ENCODE measurements at regions of chr3 and their contacts with region 1.

Region 1: GRCh38 chr3:197711973-197712707 is 24.6 kb downstream of the RUBCN start:
- DNase-seq: peak; percentile 98
- H3K4me3 ChIP-seq: peak overlapping the region; percentile 15 to 57 (median 44)
- H3K27ac ChIP-seq: peak overlapping the region; percentile 99
- H3K4me1 ChIP-seq: peaks cover 16% of the 10 kb centered on the region
- H3K27me3 ChIP-seq: no peaks in the 10 kb centered on the region
- CTCF ChIP-seq: no peak

Region 2: DNA sequence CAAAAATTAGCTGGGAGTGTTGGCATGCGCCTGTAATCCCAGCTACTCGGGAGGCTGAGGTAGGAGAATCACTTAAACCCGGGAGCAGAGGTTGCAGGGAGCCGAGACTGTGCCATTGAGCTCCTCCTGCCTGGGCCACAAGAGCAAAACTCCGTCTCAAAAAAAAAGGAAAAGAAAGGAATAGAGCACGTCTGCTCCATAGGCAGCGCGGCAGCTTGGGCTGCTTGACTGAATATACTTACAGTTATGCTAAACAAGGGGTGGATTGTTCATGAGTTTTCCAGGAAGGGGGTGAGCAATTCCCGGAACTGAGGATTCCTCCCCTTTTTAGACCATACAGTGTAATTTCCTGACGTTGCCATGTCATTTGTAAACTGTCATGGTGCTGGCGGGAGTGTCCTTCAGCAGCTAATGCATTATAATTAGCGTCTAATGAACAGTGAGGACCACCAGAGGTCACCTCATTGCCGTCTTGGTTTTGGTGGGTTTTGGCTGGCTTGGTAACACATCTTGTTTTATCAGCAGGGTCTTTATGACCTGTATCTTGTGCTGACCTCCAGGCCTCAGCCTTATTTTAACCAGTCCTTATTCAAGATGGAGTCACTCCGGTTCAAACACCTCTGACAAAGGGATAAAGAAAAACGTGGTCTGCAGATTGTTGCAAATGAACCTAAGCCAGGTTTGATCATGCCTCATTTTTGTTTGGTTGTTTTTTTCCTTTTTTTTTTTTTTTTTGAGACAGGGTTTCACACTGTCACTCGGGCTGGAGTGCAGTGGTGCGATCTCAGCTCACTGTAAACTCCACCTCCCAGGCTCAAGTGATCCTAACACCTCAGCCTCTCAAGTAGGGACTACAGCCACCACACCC is 869.3 kb before region 1 on chr3:
- CTCF ChIA-PET with region 1: no interaction called
- dilution Hi-C with region 1: no loop called
- in situ Hi-C with region 1: no loop called
- intact Hi-C with region 1: no loop called
- DNase-seq: no peak
- H3K4me3 ChIP-seq: no peak overlapping the region
- H3K27ac ChIP-seq: no peak overlapping the region
- H3K4me1 ChIP-seq: no peaks in the 10 kb centered on the region
- H3K27me3 ChIP-seq: no peaks in the 10 kb centered on the region
- CTCF ChIP-seq: no peak

Region 3: DNA sequence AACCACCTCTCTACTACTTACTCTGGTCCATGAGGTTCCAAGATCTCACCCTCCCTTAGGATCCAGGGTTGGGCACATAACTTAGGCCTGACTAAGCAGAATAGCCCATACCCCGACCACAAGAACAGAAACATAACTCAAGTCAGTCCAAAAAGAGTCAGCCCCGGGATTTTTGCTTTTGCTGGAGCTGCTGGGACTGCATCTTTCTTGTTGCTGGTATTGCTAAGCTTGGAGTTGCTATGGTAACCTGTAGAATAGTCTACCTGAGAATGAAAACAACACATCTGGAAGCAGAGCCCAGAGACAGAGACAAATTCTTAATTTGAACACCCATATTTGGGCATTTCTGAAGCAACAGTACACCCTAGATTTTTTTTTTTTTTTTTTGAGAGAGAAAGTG is 18.1 kb after region 1 on chr3:
- CTCF ChIA-PET with region 1: no interaction called
- dilution Hi-C with region 1: no loop called
- in situ Hi-C with region 1: no loop called
- intact Hi-C with region 1: loop called (anchors 1 kb)
- DNase-seq: peak; percentile 96
- H3K4me3 ChIP-seq: no peak overlapping the region
- H3K27ac ChIP-seq: peak overlapping the region; percentile 95
- H3K4me1 ChIP-seq: peaks cover 7% of the 10 kb centered on the region
- H3K27me3 ChIP-seq: no peaks in the 10 kb centered on the region
- CTCF ChIP-seq: no peak

Region 4: DNA sequence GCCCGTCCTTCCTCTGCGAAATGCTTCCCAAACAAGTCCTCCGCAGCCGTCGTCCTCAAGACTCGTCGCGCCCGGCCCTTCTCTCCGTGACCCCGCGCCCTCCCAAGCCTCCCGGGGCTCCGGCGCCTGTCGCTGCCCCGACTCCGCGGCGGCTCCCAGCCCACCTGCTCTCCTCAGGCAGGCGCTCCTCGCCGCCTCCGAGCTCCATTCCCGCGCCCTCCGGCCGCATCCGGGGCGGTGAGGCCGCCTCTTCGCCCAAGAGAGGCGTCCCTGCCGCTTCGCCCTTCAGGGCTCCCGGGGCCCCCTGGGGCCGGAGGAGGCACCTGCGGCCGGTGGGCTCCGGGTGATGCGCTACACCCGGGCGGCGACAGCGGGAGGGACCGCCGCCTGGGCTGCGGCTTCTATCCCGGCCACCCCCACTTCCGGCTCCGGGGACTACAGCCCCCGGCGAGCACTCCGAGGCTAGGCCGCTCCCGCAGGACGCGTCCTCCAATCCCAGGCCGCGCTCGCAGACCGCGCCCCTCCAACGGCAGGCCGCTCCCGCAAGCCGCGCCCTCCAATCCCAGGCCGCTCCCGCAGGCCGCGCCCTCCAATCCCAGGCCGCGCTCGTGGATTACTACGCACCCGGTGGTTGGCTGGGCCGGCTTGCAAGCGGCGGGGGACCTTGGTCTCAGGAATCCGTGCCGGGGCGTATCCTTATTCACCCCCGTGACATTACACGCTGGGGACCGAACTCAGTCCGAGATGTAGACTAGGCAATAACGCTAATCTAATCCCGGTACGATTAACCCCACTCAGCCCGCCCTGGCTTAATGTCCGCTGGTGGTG is 24.6 kb after region 1 on chr3 and contains the start of gene RUBCN:
- CTCF ChIA-PET with region 1: no interaction called
- dilution Hi-C with region 1: no loop called
- in situ Hi-C with region 1: no loop called
- intact Hi-C with region 1: loop called (anchors 1 kb)
- DNase-seq: peak; percentile 96
- H3K4me3 ChIP-seq: peak within 1 kb of the TSS; percentile 53 to 83 (median 81)
- H3K27ac ChIP-seq: peak within 1 kb of the TSS; percentile 65
- H3K4me1 ChIP-seq: peaks cover 15% of the 10 kb centered on the region
- H3K27me3 ChIP-seq: no peaks in the 10 kb centered on the region
- CTCF ChIP-seq: no peak
- total RNA-seq, gene RUBCN: 21.0 to 32.6 TPM

Region 5: GRCh38 chr3:197749601-197750395 is 37.7 kb after region 1 on chr3 and contains the start of gene FYTTD1:
- CTCF ChIA-PET with region 1: interaction called, 7 read pairs
- dilution Hi-C with region 1: no loop called
- in situ Hi-C with region 1: no loop called
- intact Hi-C with region 1: loop called (anchors 1 kb)
- DNase-seq: peak; percentile 80
- H3K4me3 ChIP-seq: peak within 1 kb of the TSS; percentile 61 to 87 (median 81)
- H3K27ac ChIP-seq: peak within 1 kb of the TSS; percentile 66
- H3K4me1 ChIP-seq: peaks cover 20% of the 10 kb centered on the region
- H3K27me3 ChIP-seq: no peaks in the 10 kb centered on the region
- CTCF ChIP-seq: peak; percentile 18 to 42
- total RNA-seq, gene FYTTD1: 49.0 to 59.6 TPM